Activated T-helper 2 cell treated with anti-CD3 and anti-CD28 coated beads, Interferon-gamma antibody, Interleukin-2, Interleukin-4, amounts not matched to agents 10 μg/mL and 5 μg/mL and 100 μg/mL, durations not matched to agents 14 hours and 24 hours and 36 hours (primary cell): ENCODE measurements at regions of chr19 and their contacts with region 1.

Region 1: GRCh38 chr19:41531438-41532311 is 44.3 kb upstream of the CEACAM21 start:
- DNase-seq: peak; percentile 84
- H3K4me3 Mint-ChIP-seq: peak overlapping the region; percentile 86
- H3K27ac Mint-ChIP-seq: peak overlapping the region; percentile 79
- H3K4me1 Mint-ChIP-seq: peaks cover 64% of the 10 kb centered on the region
- H3K27me3 Mint-ChIP-seq: peaks cover 6% of the 10 kb centered on the region

Region 2: DNA sequence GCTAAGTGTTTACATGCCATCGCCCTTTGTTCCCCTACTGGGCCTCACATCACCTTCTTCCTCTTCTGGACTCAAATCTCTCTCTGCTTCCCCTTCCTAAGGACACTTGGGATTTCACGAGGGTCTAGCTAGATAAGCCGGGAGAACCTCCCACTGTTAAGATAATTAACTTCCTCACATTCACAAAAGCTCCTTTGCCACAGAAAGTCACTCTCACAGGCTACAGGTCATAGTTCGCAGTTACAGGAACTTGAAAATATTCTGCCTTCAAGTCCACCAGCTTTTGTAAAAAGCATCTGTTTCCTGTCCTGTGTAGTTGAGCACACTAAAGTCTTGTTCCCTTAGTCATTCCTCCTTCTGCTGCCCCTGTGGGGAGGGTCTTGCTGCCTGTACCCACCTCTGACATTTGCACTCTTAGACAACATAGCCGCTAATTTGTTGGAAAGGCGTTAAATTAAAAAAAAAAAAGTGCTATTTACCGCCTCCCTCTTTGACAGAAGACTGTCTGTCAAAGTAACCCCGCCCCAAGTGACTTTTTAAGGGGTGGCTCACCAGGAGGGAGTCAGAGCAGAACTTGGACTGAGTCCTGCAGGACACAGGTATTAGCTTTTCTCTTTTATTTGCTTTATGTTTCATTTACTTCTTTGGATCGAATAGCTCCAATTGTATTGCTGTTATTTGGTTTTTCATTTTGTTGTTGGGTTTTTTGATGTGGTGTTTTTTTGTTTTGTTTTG is 17.4 kb after region 1 on chr19:
- intact Hi-C with region 1: loop called (anchors 1 kb)
- DNase-seq: peak; percentile 78
- H3K4me3 Mint-ChIP-seq: peak overlapping the region; percentile 89
- H3K27ac Mint-ChIP-seq: peak overlapping the region; percentile 95
- H3K4me1 Mint-ChIP-seq: peaks cover 68% of the 10 kb centered on the region
- H3K27me3 Mint-ChIP-seq: no peaks in the 10 kb centered on the region

Region 3: GRCh38 chr19:41554907-41555306 is 23.2 kb after region 1 on chr19:
- intact Hi-C with region 1: loop called (anchors 1 kb)
- DNase-seq: no peak
- H3K4me3 Mint-ChIP-seq: peak overlapping the region; percentile 70
- H3K27ac Mint-ChIP-seq: peak overlapping the region; percentile 85
- H3K4me1 Mint-ChIP-seq: peaks cover 69% of the 10 kb centered on the region
- H3K27me3 Mint-ChIP-seq: no peaks in the 10 kb centered on the region

Region 4: GRCh38 chr19:41671491-41671890 is 139.8 kb after region 1 on chr19:
- intact Hi-C with region 1: no loop called
- DNase-seq: no peak
- H3K4me3 Mint-ChIP-seq: no peak overlapping the region
- H3K27ac Mint-ChIP-seq: no peak overlapping the region
- H3K4me1 Mint-ChIP-seq: no peaks in the 10 kb centered on the region
- H3K27me3 Mint-ChIP-seq: peaks cover 30% of the 10 kb centered on the region